Right ventricle myocardium inferior (tissue), 1 donor: ENCODE measurements at regions of chr7 and their contacts with region 1.

Region 1: GRCh38 chr7:55415173-55415778 is 50.1 kb downstream of the LANCL2 start:
- DNase-seq: peak; percentile 86
- ATAC-seq: peak; percentile 76

Region 2: GRCh38 chr7:54773472-54774399 is 641.5 kb before region 1 on chr7:
- intact Hi-C with region 1: loop called (anchors 10 kb)
- DNase-seq: peak; percentile 76
- ATAC-seq: peak; percentile 95

Region 3: DNA sequence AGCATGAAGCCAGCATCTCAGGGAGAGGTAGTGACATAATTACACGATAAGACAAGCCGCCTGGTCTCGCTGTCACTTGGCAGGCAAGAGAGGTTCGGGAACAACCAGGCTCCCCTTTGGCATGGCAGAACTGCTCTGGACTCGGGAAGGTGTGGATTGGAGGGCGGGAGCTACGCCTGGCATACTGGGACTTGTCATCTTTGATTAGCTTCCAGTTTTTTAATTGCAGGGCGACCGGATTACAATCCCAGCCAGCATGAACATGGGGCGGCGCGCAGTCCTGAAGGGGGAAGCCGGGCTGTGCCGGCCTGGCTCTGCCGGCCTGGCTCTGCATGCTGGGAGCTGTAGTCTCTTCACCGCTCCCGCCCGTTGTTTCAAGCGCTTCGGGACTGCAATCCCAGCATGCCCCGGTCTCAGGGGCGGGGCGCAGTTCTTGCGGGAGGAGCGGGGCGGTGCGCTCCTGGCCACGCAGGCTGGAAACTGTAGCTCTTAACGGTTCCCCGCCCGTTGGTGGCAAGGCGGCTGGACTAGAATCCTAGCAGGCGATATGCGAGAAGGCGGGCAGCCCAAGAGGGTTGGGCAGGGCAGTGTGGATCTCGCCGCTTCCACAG is 1989.2 kb after region 1 on chr7:
- intact Hi-C with region 1: no loop called
- DNase-seq: peak; percentile 80
- ATAC-seq: peak; percentile 97